Right cardiac atrium (tissue), 5 donors: ENCODE measurements at regions of chr2 and their contacts with region 1.

Region 1: GRCh38 chr2:226799181-226799975 is at the start of gene IRS1:
- DNase-seq: peak; percentile 77 to 92 (median 92)
- ATAC-seq: peak; percentile 60 to 66
- H3K4me3 ChIP-seq: peak within 1 kb of the TSS; percentile 79
- H3K27ac ChIP-seq: peak within 1 kb of the TSS; percentile 83
- H3K4me1 ChIP-seq: peaks cover 3% of the 10 kb centered on the region
- H3K27me3 ChIP-seq: no peaks in the 10 kb centered on the region
- total RNA-seq, gene IRS1: 14.2 to 16.0 (median 15.0) TPM

Region 2: GRCh38 chr2:225668606-225669266 is 1130.6 kb before region 1 on chr2:
- intact Hi-C with region 1: loop called in 3 of 4 experiments (anchors 5 kb)
- DNase-seq: no peak
- ATAC-seq: peak; percentile 50 to 56
- H3K4me3 ChIP-seq: no peak overlapping the region
- H3K27ac ChIP-seq: no peak overlapping the region
- H3K4me1 ChIP-seq: no peaks in the 10 kb centered on the region
- H3K27me3 ChIP-seq: no peaks in the 10 kb centered on the region

Region 3: GRCh38 chr2:225889446-225889850 is 909.9 kb before region 1 on chr2:
- intact Hi-C with region 1: loop called in 3 of 4 experiments (anchors 5 kb)
- DNase-seq: no peak
- ATAC-seq: peak in 1 of 2 donors; percentile 59
- H3K4me3 ChIP-seq: no peak overlapping the region
- H3K27ac ChIP-seq: no peak overlapping the region
- H3K4me1 ChIP-seq: no peaks in the 10 kb centered on the region
- H3K27me3 ChIP-seq: no peaks in the 10 kb centered on the region

Region 4: GRCh38 chr2:226215902-226216503 is 583.4 kb before region 1 on chr2:
- intact Hi-C with region 1: loop called (anchors 5 to 10 kb)
- DNase-seq: peak; percentile 27 to 52 (median 38)
- ATAC-seq: peak; percentile 71 to 86
- H3K4me3 ChIP-seq: no peak overlapping the region
- H3K27ac ChIP-seq: no peak overlapping the region
- H3K4me1 ChIP-seq: no peaks in the 10 kb centered on the region
- H3K27me3 ChIP-seq: no peaks in the 10 kb centered on the region

Region 5: GRCh38 chr2:226638576-226638975 is 160.8 kb before region 1 on chr2:
- intact Hi-C with region 1: loop called in 1 of 4 experiments (anchors 5 kb)
- DNase-seq: no peak
- ATAC-seq: no peak
- H3K4me3 ChIP-seq: no peak overlapping the region
- H3K27ac ChIP-seq: no peak overlapping the region
- H3K4me1 ChIP-seq: no peaks in the 10 kb centered on the region
- H3K27me3 ChIP-seq: no peaks in the 10 kb centered on the region

Region 6: GRCh38 chr2:226649871-226650660 is 149.3 kb before region 1 on chr2:
- intact Hi-C with region 1: loop called in 3 of 4 experiments (anchors 5 to 10 kb)
- DNase-seq: peak; percentile 67 to 82 (median 73)
- ATAC-seq: peak; percentile 94 to 97
- H3K4me3 ChIP-seq: no peak overlapping the region
- H3K27ac ChIP-seq: peak overlapping the region; percentile 91
- H3K4me1 ChIP-seq: peaks cover 9% of the 10 kb centered on the region
- H3K27me3 ChIP-seq: no peaks in the 10 kb centered on the region

Region 7: GRCh38 chr2:226984750-226985582 is 185.6 kb after region 1 on chr2:
- intact Hi-C with region 1: loop called in 3 of 4 experiments (anchors 10 kb)
- DNase-seq: no peak
- ATAC-seq: peak; percentile 69 to 72
- H3K4me3 ChIP-seq: no peak overlapping the region
- H3K27ac ChIP-seq: no peak overlapping the region
- H3K4me1 ChIP-seq: peaks cover 2% of the 10 kb centered on the region
- H3K27me3 ChIP-seq: no peaks in the 10 kb centered on the region